PC-9 (cell line): ENCODE measurements at regions of chr2 and their contacts with region 1.

Region 1: DNA sequence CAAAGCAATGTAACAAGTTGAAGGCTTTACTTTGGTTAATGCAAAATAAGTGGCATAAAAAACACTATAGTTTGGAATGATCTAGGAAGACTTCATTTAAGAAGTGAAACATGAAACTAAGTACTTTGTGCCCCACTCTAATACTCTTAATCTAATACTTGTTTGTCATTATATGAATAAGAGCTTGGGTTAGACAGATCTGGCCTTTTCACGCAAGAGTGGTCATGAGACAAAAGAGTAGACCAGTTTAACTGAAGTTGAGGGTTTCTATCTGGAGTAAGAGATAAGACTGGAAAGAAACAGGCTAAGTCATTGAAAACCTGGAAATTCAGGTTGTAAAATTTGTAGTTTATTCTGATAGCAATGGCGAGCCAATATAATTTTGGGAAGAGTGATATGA is 2.8 kb downstream of the SLC30A6 start:
- DNase-seq: no peak
- H3K4me3 ChIP-seq: no peak overlapping the region
- H3K27ac ChIP-seq: no peak overlapping the region
- H3K4me1 ChIP-seq: peaks cover 19% of the 10 kb centered on the region
- H3K27me3 ChIP-seq: no peaks in the 10 kb centered on the region
- CTCF ChIP-seq: no peak

Region 2: GRCh38 chr2:32356735-32357644 is 188.5 kb after region 1 on chr2 and contains the start of gene BIRC6:
- CTCF ChIA-PET with region 1: no interaction called
- POLR2A ChIA-PET with region 1: no interaction called
- intact Hi-C with region 1: loop called (anchors 2 kb)
- DNase-seq: peak; percentile 89 to 98
- H3K4me3 ChIP-seq: peak within 1 kb of the TSS; percentile 98
- H3K27ac ChIP-seq: peak within 1 kb of the TSS; percentile 75
- H3K4me1 ChIP-seq: peaks cover 12% of the 10 kb centered on the region
- H3K27me3 ChIP-seq: no peaks in the 10 kb centered on the region
- CTCF ChIP-seq: no peak
- total RNA-seq, gene BIRC6: 69.6 and 79.0 TPM in 2 replicates